HepG2 (cell line): ENCODE measurements at regions of chr17 and their contacts with region 1.

Region 1: GRCh38 chr17:44919885-44920564 is 4.7 kb upstream of the GFAP start:
- DNase-seq: peak; percentile 73
- ATAC-seq: peak; percentile 81
- H3K4me3 ChIP-seq: no peak overlapping the region
- H3K27ac ChIP-seq: no peak overlapping the region
- H3K4me1 ChIP-seq: peaks cover 29% of the 10 kb centered on the region
- H3K27me3 ChIP-seq: peaks cover 9 to 30% of the 10 kb centered on the region in 2 experiments; a peak in 4 of 5 replicates
- CTCF ChIP-seq: peak; percentile 99
- EP300 ChIP-seq: no peak
- POLR2A ChIP-seq: no peak
- RAD21 ChIP-seq: peak; percentile 94

Region 2: GRCh38 chr17:44961921-44962350 is 41.9 kb after region 1 on chr17:
- CTCF ChIA-PET with region 1: no interaction called
- POLR2A ChIA-PET with region 1: no interaction called
- in situ Hi-C with region 1: loop called (anchors 5 kb)
- intact Hi-C with region 1: loop called (anchors 2 kb)
- DNase-seq: peak; percentile 49
- ATAC-seq: peak; percentile 91
- H3K4me3 ChIP-seq: peak overlapping the region in 1 of 3 experiments; percentile 21; a peak in 1 of 6 replicates
- H3K27ac ChIP-seq: no peak overlapping the region
- H3K4me1 ChIP-seq: peaks cover 21% of the 10 kb centered on the region
- H3K27me3 ChIP-seq: peaks cover 8 to 40% of the 10 kb centered on the region in 2 experiments
- CTCF ChIP-seq: peak; percentile 72
- EP300 ChIP-seq: no peak
- POLR2A ChIP-seq: no peak
- RAD21 ChIP-seq: peak; percentile 42

Region 3: GRCh38 chr17:45021607-45022287 is 101.7 kb after region 1 on chr17:
- CTCF ChIA-PET with region 1: interaction called, 24 read pairs
- POLR2A ChIA-PET with region 1: interaction called, 11 read pairs
- in situ Hi-C with region 1: loop called (anchors 5 kb)
- intact Hi-C with region 1: loop called (anchors 1 kb)
- DNase-seq: peak; percentile 53
- ATAC-seq: peak; percentile 81
- H3K4me3 ChIP-seq: peak overlapping the region; percentile 55 to 77 (median 59)
- H3K27ac ChIP-seq: peak overlapping the region; percentile 60
- H3K4me1 ChIP-seq: peaks cover 50% of the 10 kb centered on the region
- H3K27me3 ChIP-seq: peaks cover 0 to 16% of the 10 kb centered on the region in 2 experiments; a peak in 2 of 5 replicates
- CTCF ChIP-seq: peak; percentile 79
- EP300 ChIP-seq: no peak
- POLR2A ChIP-seq: peak; percentile 32 to 65; a peak in 2 of 4 replicates
- RAD21 ChIP-seq: peak; percentile 98